Prostate gland (tissue), 2 donors: ENCODE measurements at regions of chr11 and their contacts with region 1.

Region 1: GRCh38 chr11:12893787-12894672 is 115.1 kb upstream of the RASSF10 start:
- DNase-seq: peak; percentile 44
- H3K4me3 ChIP-seq: no peak overlapping the region
- H3K27ac ChIP-seq: no peak overlapping the region
- H3K4me1 ChIP-seq: no peaks in the 10 kb centered on the region
- H3K27me3 ChIP-seq: no peaks in the 10 kb centered on the region
- CTCF ChIP-seq: peak; percentile 64 to 92 (median 84)
- POLR2A ChIP-seq: no peak

Region 2: GRCh38 chr11:12288212-12288930 is 605.7 kb before region 1 on chr11:
- intact Hi-C with region 1: loop called (anchors 5 kb)
- DNase-seq: peak; percentile 62
- H3K4me3 ChIP-seq: no peak overlapping the region
- H3K27ac ChIP-seq: peak overlapping the region; percentile 0 to 43
- H3K4me1 ChIP-seq: no peaks in the 10 kb centered on the region
- H3K27me3 ChIP-seq: no peaks in the 10 kb centered on the region
- CTCF ChIP-seq: peak; percentile 63 to 80 (median 70)
- POLR2A ChIP-seq: no peak

Region 3: GRCh38 chr11:12331239-12331874 is 562.7 kb before region 1 on chr11:
- intact Hi-C with region 1: loop called (anchors 2 kb)
- DNase-seq: peak; percentile 83
- H3K4me3 ChIP-seq: no peak overlapping the region
- H3K27ac ChIP-seq: no peak overlapping the region
- H3K4me1 ChIP-seq: no peaks in the 10 kb centered on the region
- H3K27me3 ChIP-seq: no peaks in the 10 kb centered on the region
- CTCF ChIP-seq: peak; percentile 41 to 90 (median 82)
- POLR2A ChIP-seq: no peak

Region 4: GRCh38 chr11:12356944-12357650 is 536.9 kb before region 1 on chr11:
- intact Hi-C with region 1: no loop called
- DNase-seq: no peak
- H3K4me3 ChIP-seq: no peak overlapping the region
- H3K27ac ChIP-seq: no peak overlapping the region
- H3K4me1 ChIP-seq: no peaks in the 10 kb centered on the region
- H3K27me3 ChIP-seq: no peaks in the 10 kb centered on the region
- CTCF ChIP-seq: no peak
- POLR2A ChIP-seq: no peak

Region 5: GRCh38 chr11:12411806-12412727 is 482.0 kb before region 1 on chr11:
- intact Hi-C with region 1: loop called (anchors 2 kb)
- DNase-seq: no peak
- H3K4me3 ChIP-seq: no peak overlapping the region
- H3K27ac ChIP-seq: peak overlapping the region; percentile 42 to 64
- H3K4me1 ChIP-seq: no peaks in the 10 kb centered on the region
- H3K27me3 ChIP-seq: no peaks in the 10 kb centered on the region
- CTCF ChIP-seq: peak; percentile 34 to 70 (median 66)
- POLR2A ChIP-seq: no peak

Region 6: DNA sequence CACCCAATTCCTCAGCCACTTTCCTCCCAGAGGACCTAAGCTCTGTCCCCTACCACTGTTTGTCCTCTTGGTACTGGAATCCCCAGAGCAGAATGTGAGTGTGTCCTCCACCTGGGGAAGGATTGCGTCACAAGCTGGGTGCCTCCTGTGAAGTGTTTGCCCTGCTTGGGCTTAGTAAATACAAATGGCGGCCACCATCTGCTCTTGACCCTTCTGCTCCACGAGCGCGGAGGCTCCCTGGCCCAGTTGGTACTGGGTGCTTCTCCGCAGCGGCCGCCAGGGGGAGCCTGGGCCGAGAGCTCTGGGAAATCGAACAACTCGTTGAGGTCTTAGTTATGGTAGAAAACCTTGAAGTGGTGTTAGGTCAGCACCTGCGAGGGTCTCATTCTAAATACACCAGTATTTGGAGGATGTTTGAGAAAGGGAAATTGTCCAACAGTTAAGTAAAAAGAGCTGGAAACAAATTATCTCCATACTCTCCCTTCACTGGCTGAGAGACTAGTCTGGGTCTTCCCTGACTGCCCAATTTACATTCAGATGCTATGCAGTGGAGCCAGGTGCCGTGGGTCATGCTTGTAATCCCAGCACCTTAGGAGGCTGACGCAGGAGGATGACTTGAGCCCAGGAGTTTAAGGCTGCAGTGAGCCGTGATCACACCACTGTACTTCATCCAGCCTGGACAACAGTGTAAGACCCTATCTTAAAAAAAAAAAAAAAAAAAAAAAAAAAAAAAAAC is 294.5 kb before region 1 on chr11:
- intact Hi-C with region 1: loop called (anchors 5 kb)
- DNase-seq: peak; percentile 7
- H3K4me3 ChIP-seq: no peak overlapping the region
- H3K27ac ChIP-seq: no peak overlapping the region
- H3K4me1 ChIP-seq: no peaks in the 10 kb centered on the region
- H3K27me3 ChIP-seq: no peaks in the 10 kb centered on the region
- CTCF ChIP-seq: peak in 3 of 4 experiments; percentile 41 to 60 (median 51)
- POLR2A ChIP-seq: no peak

Region 7: GRCh38 chr11:12673924-12674570 is 220.0 kb before region 1 on chr11 and contains the start of gene TEAD1:
- intact Hi-C with region 1: loop called (anchors 5 kb)
- DNase-seq: peak; percentile 97
- H3K4me3 ChIP-seq: peak within 1 kb of the TSS; percentile 83 to 90
- H3K27ac ChIP-seq: peak within 1 kb of the TSS; percentile 97 to 98
- H3K4me1 ChIP-seq: no peaks in the 10 kb centered on the region
- H3K27me3 ChIP-seq: no peaks in the 10 kb centered on the region
- CTCF ChIP-seq: peak in 2 of 4 experiments; percentile 11 to 27
- POLR2A ChIP-seq: peak; percentile 69
- total RNA-seq, gene TEAD1: 47.9 to 87.0 TPM

Region 8: DNA sequence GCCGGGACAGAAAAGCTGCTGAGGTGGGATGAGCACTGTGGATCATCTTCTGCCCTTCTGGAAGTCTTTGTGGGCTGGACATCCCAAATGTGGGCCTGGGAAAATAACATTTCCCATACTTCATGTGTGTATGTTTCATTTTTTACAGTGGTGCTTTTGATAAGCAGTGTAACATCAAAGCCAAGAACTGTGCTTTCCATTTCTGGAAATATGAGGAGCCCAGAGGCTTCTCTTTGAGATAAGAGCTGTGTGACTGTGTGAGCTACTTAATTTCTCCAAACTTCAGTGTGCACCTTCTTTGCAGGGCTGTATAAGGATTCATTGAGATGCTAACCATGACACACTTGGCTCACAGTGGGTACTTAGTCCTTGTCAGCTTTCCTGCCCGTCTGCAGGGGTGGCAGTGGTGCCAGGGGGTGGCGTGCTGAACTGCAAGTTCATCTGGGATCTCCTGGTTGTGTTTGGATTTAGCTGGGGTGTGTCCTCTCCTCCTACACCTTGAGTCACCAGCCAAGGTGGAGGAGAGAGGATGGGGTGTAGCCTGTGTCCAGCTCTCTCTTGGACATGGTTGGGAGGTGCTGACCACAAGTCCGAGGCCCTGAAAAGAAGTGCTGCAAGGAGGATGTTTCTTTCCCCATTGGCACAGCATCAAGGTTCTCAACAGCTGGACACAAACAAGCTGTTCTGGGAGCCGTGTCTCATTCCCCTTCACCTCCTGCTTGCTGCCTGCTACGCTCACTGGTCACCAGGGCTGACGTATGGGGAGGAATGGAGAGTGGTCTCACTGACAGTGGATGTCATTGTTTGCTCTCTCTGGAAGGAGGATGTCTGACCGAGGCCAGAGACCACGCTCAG is 80.4 kb before region 1 on chr11:
- intact Hi-C with region 1: loop called (anchors 5 kb)
- DNase-seq: no peak
- H3K4me3 ChIP-seq: no peak overlapping the region
- H3K27ac ChIP-seq: peak overlapping the region; percentile 59 to 63
- H3K4me1 ChIP-seq: peaks cover 2% of the 10 kb centered on the region
- H3K27me3 ChIP-seq: no peaks in the 10 kb centered on the region
- CTCF ChIP-seq: peak in 1 of 4 experiments; percentile 40
- POLR2A ChIP-seq: no peak

Region 9: DNA sequence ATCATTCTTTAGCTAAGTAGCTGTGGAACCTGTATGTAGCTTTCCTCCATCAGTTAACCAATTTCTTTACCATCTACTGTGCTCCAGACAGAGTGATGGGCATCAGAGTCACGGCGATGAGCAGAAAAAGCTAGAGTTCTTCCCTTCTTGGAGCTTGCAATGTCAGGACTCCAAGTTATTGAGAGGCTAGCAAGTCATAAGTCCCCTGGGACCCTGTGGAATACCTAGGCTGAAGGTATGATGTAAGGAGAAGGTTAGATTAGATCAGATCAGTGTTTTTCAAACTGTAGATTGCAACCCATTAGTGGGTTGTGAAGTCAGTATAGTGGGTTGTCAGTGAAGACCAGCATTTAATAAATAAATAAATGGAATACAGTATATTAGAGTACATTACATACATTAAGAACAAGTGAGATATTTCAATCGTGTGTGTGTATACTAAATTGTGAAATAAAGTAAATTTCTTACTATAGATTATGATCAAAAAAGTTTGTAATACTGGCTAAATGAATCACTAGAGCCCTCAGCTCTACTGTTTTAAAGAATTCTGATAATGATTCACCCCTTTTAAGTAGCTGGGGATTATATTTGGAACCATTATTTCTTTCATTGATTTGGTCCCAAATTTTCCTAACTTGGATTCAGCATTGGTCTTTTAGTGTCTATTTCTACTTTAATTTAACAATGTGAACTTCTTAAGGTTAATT is 167.4 kb after region 1 on chr11:
- intact Hi-C with region 1: no loop called
- DNase-seq: no peak
- H3K4me3 ChIP-seq: no peak overlapping the region
- H3K27ac ChIP-seq: no peak overlapping the region
- H3K4me1 ChIP-seq: no peaks in the 10 kb centered on the region
- H3K27me3 ChIP-seq: peaks cover 4% of the 10 kb centered on the region
- CTCF ChIP-seq: no peak
- POLR2A ChIP-seq: no peak